ENCODE measurements at regions of chr16 and their contacts with region 1.

Region 1: GRCh38 chr16:55842369-55843104 is 9.6 kb upstream of the CES1 start:
- DNase-seq: peak; percentile 51
- ATAC-seq: peak; percentile 55; the same call in 1 of the 2 replicates
- H3K4me3 ChIP-seq: no peak overlapping the region
- H3K27ac ChIP-seq: no peak overlapping the region
- H3K4me1 ChIP-seq: no peaks in the 10 kb centered on the region
- H3K27me3 ChIP-seq: peaks cover 18% of the 10 kb centered on the region
- CTCF ChIP-seq: peak; percentile 67

Region 2: DNA sequence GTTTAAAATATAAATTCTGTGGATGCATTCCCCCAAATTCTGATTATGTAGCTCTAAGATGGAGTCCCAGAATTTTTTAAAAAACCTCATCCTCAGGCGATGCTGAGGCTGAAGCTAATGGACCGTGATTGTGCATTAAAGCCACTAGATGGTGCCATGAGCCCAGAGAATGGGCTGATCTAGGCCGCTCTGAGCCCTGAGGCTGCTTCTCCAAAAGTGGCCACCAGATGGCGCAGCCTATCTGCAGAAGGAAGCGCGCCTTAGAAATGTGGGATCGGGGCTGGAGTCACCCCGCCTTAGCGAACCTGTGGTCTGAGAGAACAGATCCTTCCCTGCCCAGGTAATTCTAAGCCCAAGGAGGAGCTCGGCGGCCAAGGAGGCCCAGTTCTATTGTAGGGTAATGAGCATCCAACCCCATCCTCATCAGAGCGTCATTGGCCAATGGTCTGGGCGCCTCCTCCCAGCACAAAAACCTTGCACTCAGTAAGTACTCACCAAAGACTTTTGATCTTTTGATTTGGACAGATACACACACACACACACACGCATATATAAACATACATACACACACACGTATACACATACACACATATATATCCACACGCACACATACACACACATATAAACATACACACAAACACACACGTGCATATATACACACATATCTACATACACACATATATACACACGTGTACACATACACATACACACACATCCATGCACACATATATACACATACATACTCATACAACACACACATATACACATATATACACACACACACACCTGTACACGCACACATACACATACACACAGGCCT is 377.2 kb before region 1 on chr16:
- CTCF ChIA-PET with region 1: no interaction called
- POLR2A ChIA-PET with region 1: no interaction called
- intact Hi-C with region 1: loop called (anchors 5 kb)
- DNase-seq: peak; percentile 86
- ATAC-seq: peak; percentile 93
- H3K4me3 ChIP-seq: no peak overlapping the region
- H3K27ac ChIP-seq: no peak overlapping the region
- H3K4me1 ChIP-seq: peaks cover 1% of the 10 kb centered on the region; the same call in 1 of the 2 replicates
- H3K27me3 ChIP-seq: no peaks in the 10 kb centered on the region
- CTCF ChIP-seq: peak; percentile 98

Region 3: GRCh38 chr16:55711959-55712876 is 130.3 kb before region 1 on chr16:
- CTCF ChIA-PET with region 1: no interaction called
- POLR2A ChIA-PET with region 1: no interaction called
- intact Hi-C with region 1: loop called (anchors 1 kb)
- DNase-seq: peak; percentile 64
- ATAC-seq: peak; percentile 40; the same call in 1 of the 2 replicates
- H3K4me3 ChIP-seq: no peak overlapping the region
- H3K27ac ChIP-seq: no peak overlapping the region
- H3K4me1 ChIP-seq: no peaks in the 10 kb centered on the region
- H3K27me3 ChIP-seq: peaks cover 11% of the 10 kb centered on the region; the same call in 1 of the 2 replicates
- CTCF ChIP-seq: peak; percentile 67

Region 4: DNA sequence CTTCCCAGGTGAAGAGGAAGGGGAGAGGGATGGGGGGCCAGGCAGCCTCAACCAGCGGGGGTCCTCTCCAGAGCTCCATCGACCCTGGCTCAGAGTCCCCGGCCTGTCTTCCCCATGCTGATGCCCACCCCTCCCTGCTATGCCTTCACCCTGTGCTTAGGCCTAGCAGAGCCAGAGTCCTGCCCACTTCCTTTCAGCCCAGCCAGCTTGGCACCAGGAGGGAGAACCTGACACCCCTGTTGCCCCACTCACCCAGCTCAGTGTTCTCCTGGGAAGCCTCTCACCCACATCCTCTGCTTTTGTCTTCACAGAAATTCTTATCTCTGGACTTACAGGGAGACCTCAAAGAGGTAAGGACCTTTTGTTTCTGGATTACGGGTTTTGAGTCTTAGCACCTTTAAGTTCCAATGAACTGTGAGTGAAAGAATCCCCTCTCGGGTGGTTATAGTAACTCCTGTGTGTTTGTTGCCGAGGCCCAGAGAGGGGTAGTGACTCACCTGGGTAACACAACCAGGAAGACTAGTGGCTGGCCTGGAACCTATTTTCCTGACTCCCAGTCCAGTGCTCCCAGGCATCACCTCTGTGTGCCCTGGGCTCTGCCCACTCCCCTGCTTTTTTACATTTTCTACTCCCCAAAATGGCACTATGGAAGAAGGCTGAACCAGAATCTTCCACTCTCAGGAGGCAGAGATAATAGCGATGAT is 63.0 kb before region 1 on chr16:
- CTCF ChIA-PET with region 1: no interaction called
- POLR2A ChIA-PET with region 1: no interaction called
- intact Hi-C with region 1: no loop called
- DNase-seq: no peak
- ATAC-seq: no peak
- H3K4me3 ChIP-seq: no peak overlapping the region
- H3K27ac ChIP-seq: no peak overlapping the region
- H3K4me1 ChIP-seq: no peaks in the 10 kb centered on the region
- H3K27me3 ChIP-seq: no peaks in the 10 kb centered on the region
- CTCF ChIP-seq: no peak

Region 5: DNA sequence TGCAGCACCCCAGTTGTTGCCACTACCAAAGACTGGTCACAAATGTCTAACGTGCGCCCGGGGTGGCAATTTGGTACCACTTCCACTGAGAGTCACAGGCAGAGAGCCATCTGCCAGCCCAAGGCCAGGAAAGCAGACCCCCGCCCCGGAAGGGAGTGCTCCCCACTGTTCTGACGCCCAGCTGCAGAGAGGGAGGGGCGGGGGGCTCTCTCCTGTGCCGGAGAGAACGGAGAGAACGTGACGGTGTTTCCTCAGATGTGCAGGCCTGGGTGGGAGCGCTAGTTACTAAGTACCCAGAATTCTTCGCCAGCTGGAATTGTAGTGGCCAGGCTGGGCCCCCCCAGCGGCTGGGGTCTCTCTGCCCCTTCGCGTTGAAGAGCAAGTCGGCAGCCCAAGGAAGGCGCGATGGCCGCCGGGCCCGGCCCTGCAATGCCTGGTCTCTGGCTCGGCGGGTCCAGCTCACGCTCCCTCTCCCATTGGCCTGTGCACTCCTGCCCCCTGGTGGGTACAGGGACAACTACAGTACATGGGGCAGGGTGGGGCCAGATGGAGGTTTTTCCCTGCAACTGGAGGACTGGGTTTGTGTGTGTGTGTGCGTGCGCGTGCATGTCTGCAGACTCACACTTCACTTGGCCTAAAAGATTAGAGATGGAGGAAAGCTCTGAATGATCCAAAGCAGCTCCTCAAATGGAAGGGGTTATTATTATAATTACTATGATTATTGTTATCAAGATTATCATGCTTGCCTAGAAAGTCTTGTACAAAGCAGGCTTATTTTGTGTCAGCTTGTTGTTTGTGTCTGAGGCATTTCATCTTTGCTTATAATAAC is 475.7 kb after region 1 on chr16:
- CTCF ChIA-PET with region 1: no interaction called
- POLR2A ChIA-PET with region 1: no interaction called
- intact Hi-C with region 1: loop called (anchors 10 kb)
- DNase-seq: peak; percentile 73
- ATAC-seq: peak; percentile 98
- H3K4me3 ChIP-seq: no peak overlapping the region
- H3K27ac ChIP-seq: no peak overlapping the region
- H3K4me1 ChIP-seq: no peaks in the 10 kb centered on the region
- H3K27me3 ChIP-seq: 0 out of 2 replicates have a peak, but pooled peaks cover 3% of the 10 kb centered on the region
- CTCF ChIP-seq: peak; percentile 72

Measured in PC-3 (cell line).